Left lung (tissue), 14 donors: ENCODE measurements at regions of chr2 and their contacts with region 1.

Region 1: DNA sequence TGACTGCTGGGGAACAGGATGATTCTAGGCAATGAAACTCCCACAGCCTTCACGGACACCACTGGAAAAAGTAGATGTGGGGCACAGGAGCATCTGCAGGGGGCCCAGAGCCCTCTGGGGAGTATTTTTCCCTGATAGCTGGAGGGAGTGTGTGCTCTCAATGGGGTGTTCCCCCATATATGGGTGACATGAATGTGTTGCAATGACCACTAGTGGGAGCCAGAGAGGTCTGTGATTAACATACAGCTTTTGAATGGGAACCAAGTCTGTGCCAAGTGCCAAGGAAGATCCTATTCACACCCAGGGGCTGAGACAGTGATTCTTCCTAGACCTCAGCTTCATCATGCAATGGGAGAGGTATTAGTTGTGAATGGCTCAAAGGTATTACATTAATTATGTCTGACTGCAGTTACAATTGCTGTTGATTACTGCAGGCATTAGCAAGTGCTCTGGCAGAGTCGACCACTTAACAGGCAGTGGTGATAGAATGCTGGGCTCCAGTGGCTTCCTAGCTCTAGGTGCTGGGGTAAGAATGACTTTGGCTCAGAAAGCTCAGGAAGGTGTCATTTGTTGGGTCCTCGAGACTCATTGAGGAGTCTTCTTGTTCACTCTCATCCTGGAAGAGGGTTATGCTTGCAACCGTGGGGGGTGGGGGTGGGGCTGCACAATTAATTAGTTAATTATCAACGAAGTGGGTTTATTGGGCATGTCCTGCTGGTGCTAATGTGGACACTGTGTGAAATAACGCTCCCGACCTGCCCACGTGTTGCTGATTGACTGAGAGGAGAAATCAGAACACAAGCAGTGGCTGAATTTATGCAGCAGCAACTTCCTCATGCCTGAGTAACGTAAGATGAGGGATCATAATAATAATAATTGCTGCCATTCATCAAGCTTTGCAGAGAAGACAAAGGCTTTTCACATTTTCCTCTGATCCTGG is 194.1 kb downstream of the CLIP4 start:
- DNase-seq: peak in 2 of 4 donors; percentile 16 to 53
- ATAC-seq: peak; percentile 91
- H3K4me3 ChIP-seq: no peak overlapping the region
- H3K27ac ChIP-seq: no peak overlapping the region
- H3K4me1 ChIP-seq: no peaks in the 10 kb centered on the region
- H3K27me3 ChIP-seq: peaks cover 4 to 36% of the 10 kb centered on the region in 2 donors
- CTCF ChIP-seq: peak; percentile 50 to 71

Region 2: DNA sequence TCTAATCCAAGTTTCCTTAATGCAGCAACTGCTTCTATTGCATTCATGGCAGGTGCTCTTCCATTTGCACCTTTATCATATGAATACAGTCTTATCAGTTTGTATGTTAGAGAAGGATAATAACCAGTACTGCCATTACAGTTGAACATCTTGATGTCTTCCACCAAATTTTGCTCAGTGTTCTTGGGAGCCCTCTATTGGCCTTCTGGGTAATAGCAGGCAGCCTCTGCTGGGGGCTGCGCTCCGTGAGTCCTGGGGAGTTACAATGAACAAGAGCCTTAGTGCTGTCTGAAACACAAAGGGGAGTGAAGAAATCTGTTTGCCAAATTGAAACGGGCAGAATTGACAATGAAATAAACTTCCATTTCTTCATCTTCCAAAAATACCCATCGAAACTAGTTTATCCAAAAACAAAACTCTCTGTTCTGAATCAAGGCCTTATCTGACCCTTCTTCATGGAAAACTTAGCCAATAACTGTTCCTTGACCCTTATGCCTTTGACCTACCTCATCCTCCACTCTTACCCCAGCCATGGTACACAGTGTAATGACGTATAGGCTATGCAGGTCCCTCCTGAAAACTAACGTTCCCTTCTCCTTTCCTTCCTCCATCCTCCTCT is 532.1 kb after region 1 on chr2:
- intact Hi-C with region 1: loop called in 1 of 2 experiments (anchors 10 kb)
- DNase-seq: peak in 2 of 4 donors; percentile 5 to 9
- ATAC-seq: peak; percentile 87
- H3K4me3 ChIP-seq: no peak overlapping the region
- H3K27ac ChIP-seq: no peak overlapping the region
- H3K4me1 ChIP-seq: no peaks in the 10 kb centered on the region
- H3K27me3 ChIP-seq: peaks cover 0 to 5% of the 10 kb centered on the region in 2 donors
- CTCF ChIP-seq: peak; percentile 82 to 84